Right ventricle myocardium superior (tissue), 1 donor: ENCODE measurements at regions of chr12 and their contacts with region 1.

Region 1: GRCh38 chr12:6423267-6424007 is 21.3 kb upstream of the CD27 start:
- DNase-seq: peak; percentile 89
- ATAC-seq: peak; percentile 100

Region 2: DNA sequence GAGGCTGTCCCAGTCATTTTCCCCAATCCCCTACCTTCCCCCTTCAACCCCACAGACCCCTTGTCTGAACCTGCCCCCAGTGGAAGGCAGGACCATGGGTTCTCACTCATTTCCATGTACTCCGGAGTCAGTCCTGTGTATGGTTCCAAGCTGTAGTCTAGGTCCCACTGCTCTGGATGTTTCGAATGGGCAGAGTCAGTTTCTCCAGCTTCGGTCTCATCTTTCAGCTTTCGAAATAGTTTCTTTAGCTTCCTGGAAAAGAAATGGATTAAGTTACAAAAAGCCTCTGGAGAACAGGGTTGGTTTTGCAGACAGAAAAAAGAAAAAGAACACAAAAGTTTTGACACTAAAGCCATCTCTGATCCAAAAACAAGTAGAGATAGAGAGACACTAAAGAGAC is 824.1 kb before region 1 on chr12:
- intact Hi-C with region 1: no loop called
- DNase-seq: no peak
- ATAC-seq: no peak

Region 3: DNA sequence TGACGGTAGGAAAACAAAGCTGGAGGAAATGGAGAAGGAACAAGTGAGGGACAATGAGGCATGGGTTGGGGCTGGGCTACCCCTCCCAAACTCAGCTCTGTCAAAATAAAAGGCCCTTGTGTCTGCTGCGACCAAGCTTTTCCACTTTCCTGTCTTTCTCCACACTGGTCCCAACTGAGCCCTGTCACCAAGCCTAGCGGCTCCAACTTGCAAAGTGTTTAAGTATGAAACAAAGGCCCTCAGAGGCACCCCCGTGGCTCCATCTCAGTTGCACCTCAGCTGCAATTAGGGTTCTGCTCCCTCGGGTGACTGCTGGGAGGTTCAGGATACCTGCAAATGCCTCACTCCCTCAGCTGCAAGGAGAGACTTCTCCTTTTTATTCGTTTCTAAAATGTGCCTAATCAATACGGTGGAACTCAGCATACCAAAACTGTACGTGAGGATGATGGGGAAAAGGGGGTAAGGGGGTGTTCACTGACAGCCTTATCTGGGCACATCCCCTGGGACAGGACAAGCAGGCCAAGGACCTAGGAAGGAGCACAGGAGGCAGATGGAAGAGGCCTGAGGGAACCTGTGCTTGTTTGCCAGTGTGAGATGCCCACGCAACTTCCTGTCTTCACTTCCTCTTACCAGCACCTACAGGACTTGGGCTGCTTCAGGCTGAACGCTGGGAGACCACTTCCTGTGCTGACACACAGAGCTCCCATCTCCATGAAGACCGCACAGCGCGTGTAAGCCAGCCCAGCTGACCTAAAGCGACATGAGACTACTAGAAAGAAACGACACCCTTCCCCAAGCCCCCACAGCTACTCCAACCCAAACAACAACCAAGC is 38.2 kb after region 1 on chr12:
- intact Hi-C with region 1: loop called (anchors 5 kb)
- DNase-seq: peak; percentile 64
- ATAC-seq: peak; percentile 23